Mammary epithelial cell (primary cell): ENCODE measurements at regions of chr15 and their contacts with region 1.

Region 1: DNA sequence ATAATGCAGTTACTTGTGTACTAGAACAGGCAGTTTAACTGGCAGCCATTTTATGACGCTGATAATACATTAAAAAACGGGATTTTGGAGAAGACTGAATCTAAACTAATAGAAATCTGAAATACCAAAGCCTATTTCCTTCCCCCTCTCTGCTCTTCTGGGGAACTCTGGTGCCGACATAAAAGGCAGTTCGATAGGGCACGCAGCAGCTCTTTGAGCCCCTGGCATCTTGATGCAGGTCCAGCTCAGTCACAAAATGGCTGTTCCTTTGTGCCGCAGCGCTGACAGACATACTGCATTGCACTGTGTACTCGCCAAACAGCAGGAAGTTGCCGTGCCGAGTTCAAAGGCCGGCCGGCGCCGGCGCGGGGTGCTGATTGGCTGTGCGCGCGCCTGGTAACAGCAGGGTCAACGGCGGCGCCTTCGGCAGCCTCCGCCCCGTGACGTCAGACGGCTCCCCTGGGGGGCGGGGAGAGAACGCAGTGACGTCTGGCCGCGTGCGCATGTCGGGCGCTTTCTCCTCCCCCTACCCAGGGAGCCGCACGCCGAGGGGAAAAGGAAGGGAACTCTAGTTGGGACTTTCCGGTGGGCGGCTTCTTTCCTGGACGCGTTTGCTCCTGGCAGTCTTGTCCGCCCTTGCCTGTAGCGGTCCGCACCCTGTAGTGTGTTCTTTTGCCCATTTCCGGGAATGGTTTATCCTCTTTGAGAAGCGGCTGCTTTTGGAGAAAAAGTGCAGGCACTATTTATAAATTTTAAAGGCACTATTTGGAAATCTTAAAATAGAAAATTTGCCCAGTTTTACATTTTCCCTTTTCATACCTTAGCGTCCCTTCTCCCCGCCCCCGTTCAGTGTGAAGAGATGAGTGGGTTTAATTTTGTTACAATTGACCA is 4.1 kb downstream of the CHD2 start:
- DNase-seq: peak; percentile 99
- H3K4me3 ChIP-seq: peak overlapping the region; percentile 74 to 100 (median 98)
- H3K27ac ChIP-seq: peak overlapping the region; percentile 97
- H3K4me1 ChIP-seq: peaks cover 31% of the 10 kb centered on the region
- H3K27me3 ChIP-seq: no peaks in the 10 kb centered on the region
- CTCF ChIP-seq: no peak

Region 2: GRCh38 chr15:91867581-91868026 is 1036.6 kb before region 1 on chr15:
- CTCF ChIA-PET with region 1: no interaction called
- dilution Hi-C with region 1: no loop called
- in situ Hi-C with region 1: no loop called
- intact Hi-C with region 1: loop called (anchors 10 kb)
- DNase-seq: peak; percentile 99
- H3K4me3 ChIP-seq: peak overlapping the region; percentile 10 to 52 (median 32)
- H3K27ac ChIP-seq: peak overlapping the region; percentile 99
- H3K4me1 ChIP-seq: peaks cover 49% of the 10 kb centered on the region
- H3K27me3 ChIP-seq: no peaks in the 10 kb centered on the region
- CTCF ChIP-seq: no peak

Region 3: GRCh38 chr15:92803847-92804609 is 100.2 kb before region 1 on chr15:
- CTCF ChIA-PET with region 1: no interaction called
- dilution Hi-C with region 1: no loop called
- in situ Hi-C with region 1: no loop called
- intact Hi-C with region 1: loop called (anchors 1 kb)
- DNase-seq: peak; percentile 100
- H3K4me3 ChIP-seq: no peak overlapping the region
- H3K27ac ChIP-seq: peak overlapping the region; percentile 96
- H3K4me1 ChIP-seq: peaks cover 38% of the 10 kb centered on the region
- H3K27me3 ChIP-seq: no peaks in the 10 kb centered on the region
- CTCF ChIP-seq: no peak

Region 4: DNA sequence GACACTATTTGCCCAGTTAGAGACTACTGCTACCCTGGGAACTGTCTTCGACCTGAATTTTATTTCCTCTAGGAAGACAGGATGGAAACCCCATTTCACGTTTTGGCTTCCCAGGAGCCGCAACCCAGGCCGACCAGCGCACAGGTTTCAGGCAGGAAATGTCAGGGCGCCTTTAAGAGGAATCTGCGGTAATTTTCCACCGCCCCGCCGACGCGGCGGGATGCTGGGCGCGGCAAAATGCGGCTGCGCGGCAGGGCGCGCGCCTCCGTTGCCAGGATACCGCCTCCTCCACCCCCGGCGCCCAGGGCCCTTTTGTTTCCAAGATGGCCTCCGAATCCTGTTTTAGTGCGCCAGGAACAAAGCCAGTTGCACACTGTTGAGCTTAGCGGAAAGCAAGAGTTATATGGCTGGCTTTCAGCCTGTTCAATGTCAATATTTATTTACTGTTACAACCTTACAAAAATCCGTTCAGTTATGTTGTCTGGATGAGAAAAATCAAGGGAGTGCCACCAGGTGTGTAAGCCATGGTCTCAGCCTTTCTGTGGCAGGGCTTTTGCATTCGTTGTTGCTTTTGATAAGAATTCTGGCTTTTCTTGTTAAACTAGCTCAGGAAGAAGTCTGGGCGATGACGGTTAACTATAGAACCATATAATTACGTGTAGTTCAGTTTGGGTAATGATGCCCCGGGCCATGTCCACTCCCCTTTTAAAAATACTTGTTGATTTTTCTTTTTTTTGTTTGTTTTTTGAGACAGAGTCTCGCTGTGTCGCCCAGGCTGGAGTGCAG is 83.8 kb before region 1 on chr15:
- CTCF ChIA-PET with region 1: no interaction called
- dilution Hi-C with region 1: loop called (anchors 5 kb)
- in situ Hi-C with region 1: no loop called
- intact Hi-C with region 1: no loop called
- DNase-seq: peak; percentile 92
- H3K4me3 ChIP-seq: peak overlapping the region; percentile 37 to 47 (median 46)
- H3K27ac ChIP-seq: peak overlapping the region; percentile 96
- H3K4me1 ChIP-seq: peaks cover 46% of the 10 kb centered on the region
- H3K27me3 ChIP-seq: no peaks in the 10 kb centered on the region
- CTCF ChIP-seq: no peak

Region 5: DNA sequence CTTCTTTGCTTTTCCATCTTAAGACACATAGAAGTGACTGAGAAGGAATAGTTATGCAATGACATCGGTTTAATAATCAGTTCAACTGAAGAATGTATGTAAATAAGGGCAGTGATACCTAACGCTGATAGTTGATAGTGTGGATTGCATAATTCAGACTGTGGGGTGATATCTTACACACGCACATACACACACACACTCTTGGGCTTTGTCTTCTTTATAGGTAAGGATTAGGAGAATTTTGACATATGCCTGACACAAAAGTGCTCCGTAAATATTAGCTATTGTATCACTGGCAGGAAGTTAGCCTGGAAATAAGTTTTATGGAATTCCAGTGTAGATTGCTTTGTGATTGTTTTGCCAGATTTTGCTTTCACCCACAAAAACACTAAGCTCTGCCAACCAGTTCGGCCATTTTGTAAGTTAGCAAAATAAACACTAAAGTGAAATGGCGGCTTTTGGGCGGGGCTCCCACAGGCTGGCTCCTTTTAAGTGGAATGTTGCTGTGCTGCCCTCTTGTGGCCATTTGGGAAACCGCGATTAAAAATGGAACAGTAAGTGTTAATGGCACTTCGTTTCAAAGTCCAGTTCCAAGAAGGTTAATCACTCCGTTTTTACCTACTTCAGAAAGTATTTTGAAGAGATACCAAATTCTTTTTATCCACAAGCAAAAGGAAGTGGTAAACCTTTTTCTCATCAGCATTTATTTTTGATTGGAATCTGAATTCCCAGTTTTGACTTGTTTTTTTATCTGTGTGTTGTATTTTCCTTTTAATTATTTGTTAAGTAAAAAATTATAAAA is 13.6 kb after region 1 on chr15:
- CTCF ChIA-PET with region 1: no interaction called
- dilution Hi-C with region 1: no loop called
- in situ Hi-C with region 1: no loop called
- intact Hi-C with region 1: loop called (anchors 1 kb)
- DNase-seq: peak; percentile 86
- H3K4me3 ChIP-seq: peak overlapping the region in 1 of 3 experiments; percentile 8
- H3K27ac ChIP-seq: peak overlapping the region; percentile 83
- H3K4me1 ChIP-seq: peaks cover 61% of the 10 kb centered on the region
- H3K27me3 ChIP-seq: no peaks in the 10 kb centered on the region
- CTCF ChIP-seq: peak; percentile 75 to 87

Region 6: DNA sequence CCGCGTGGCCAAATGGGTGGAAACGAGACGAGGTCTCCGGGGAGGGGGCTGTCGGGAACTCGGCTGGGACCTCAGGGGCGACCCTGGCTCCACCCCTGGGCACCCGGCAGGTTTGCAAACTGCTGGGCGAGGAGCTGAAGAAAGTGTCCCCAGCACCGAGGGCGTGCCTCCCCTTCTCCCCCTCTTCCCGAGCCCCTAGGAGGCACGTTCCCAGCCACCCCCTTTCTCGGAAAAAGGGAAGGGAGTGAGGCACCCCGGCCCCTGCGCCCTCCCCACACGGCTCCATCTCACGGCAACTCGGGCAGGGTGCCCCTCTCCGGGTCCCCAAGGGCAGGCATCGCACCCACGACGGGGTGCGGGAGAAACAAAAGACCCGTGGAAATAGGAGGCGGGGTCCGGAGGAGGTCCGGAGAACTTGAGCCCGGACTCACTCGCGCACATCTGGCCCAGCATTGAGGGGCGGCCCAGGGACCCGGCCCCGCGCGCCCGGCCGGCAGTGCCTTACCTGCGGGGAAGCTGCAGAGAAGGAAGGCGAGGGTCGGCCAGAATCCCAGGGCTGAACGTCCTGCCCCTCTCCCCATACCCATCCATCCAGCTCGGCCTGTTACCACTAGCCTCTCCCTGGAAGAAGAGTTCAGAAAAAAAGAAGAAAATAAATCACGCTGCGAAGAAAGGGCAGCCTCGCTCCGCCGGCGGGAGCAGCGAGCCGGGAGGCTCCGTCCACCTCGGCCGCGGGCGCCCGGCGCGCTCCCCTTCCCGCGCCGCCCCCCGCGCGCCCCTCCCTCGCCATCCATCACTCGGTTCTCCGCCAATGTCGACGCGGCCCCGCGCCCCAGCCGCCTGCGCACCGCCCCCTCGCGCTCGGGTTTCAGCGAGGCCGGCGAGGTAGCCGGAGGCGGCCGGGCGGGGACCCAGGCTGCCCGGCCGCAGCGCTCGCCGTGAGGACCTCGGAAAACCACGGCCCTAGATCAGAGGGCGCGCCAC is 168.5 kb after region 1 on chr15:
- CTCF ChIA-PET with region 1: no interaction called
- dilution Hi-C with region 1: no loop called
- in situ Hi-C with region 1: no loop called
- intact Hi-C with region 1: no loop called
- DNase-seq: peak; percentile 49
- H3K4me3 ChIP-seq: peak overlapping the region; percentile 39 to 49 (median 45)
- H3K27ac ChIP-seq: no peak overlapping the region
- H3K4me1 ChIP-seq: peaks cover 13% of the 10 kb centered on the region
- H3K27me3 ChIP-seq: peaks cover 28% of the 10 kb centered on the region
- CTCF ChIP-seq: no peak